Gastrocnemius medialis (tissue), 4 donors: ENCODE measurements at regions of chr7 and their contacts with region 1.

Region 1: GRCh38 chr7:113774182-113774807 is 144.5 kb downstream of the PPP1R3A start:
- DNase-seq: peak; percentile 34 to 49
- ATAC-seq: peak; percentile 100
- H3K4me3 ChIP-seq: peak overlapping the region in 2 of 4 donors; percentile 6 to 18
- H3K27ac ChIP-seq: peak overlapping the region; percentile 72 to 82 (median 74)
- H3K4me1 ChIP-seq: peaks cover 8 to 20% of the 10 kb centered on the region in 2 donors
- H3K27me3 ChIP-seq: no peaks in the 10 kb centered on the region
- CTCF ChIP-seq: peak; percentile 63 to 74 (median 67)
- POLR2A ChIP-seq: no peak

Region 2: GRCh38 chr7:113824117-113824823 is 50.0 kb after region 1 on chr7:
- in situ Hi-C with region 1: no loop called
- intact Hi-C with region 1: loop called (anchors 5 kb)
- DNase-seq: peak; percentile 3 to 46
- ATAC-seq: peak; percentile 96 to 99
- H3K4me3 ChIP-seq: peak overlapping the region in 2 of 4 donors; percentile 9 to 13
- H3K27ac ChIP-seq: peak overlapping the region; percentile 65 to 78 (median 74)
- H3K4me1 ChIP-seq: peaks cover 27 to 29% of the 10 kb centered on the region in 2 donors
- H3K27me3 ChIP-seq: no peaks in the 10 kb centered on the region
- CTCF ChIP-seq: no peak
- POLR2A ChIP-seq: no peak

Region 3: GRCh38 chr7:113945018-113945938 is 171.0 kb after region 1 on chr7:
- in situ Hi-C with region 1: loop called in 1 of 4 experiments (anchors 25 kb)
- intact Hi-C with region 1: no loop called
- DNase-seq: no peak
- ATAC-seq: peak; percentile 19 to 41
- H3K4me3 ChIP-seq: no peak overlapping the region
- H3K27ac ChIP-seq: no peak overlapping the region
- H3K4me1 ChIP-seq: peaks cover 0 to 3% of the 10 kb centered on the region in 2 donors
- H3K27me3 ChIP-seq: no peaks in the 10 kb centered on the region
- CTCF ChIP-seq: no peak
- POLR2A ChIP-seq: no peak